Ovary (tissue), 10 donors: ENCODE measurements at regions of chr17 and their contacts with region 1.

Region 1: GRCh38 chr17:28733346-28733745 is 4.8 kb downstream of the NEK8 start:
- DNase-seq: no peak
- H3K4me3 ChIP-seq: no peak overlapping the region
- H3K27ac ChIP-seq: no peak overlapping the region
- H3K4me1 ChIP-seq: no peaks in the 10 kb centered on the region
- H3K27me3 ChIP-seq: no peaks in the 10 kb centered on the region
- CTCF ChIP-seq: no peak
- EP300 ChIP-seq: no peak
- POLR2A ChIP-seq: no peak

Region 2: DNA sequence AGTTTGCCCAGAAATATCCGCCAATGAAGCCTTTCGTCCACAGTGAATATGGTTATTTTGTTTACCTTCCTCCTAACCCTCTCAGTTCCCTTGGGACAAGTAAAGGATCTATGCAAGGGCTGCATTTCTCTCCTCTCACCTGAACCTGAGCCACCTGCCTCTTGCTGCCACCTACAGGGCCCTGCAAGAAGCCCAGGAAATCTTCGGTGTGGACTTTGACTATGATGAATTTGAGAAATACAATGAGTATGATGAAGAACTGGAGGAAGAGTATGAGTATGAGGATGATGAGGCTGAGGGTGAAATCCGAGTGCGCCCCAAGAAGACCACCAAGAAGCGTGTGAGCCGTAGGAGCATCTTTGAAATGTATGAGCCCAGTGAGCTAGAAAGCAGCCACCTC is 57.4 kb before region 1 on chr17:
- intact Hi-C with region 1: no loop called
- DNase-seq: no peak
- H3K4me3 ChIP-seq: no peak overlapping the region
- H3K27ac ChIP-seq: no peak overlapping the region
- H3K4me1 ChIP-seq: no peaks in the 10 kb centered on the region
- H3K27me3 ChIP-seq: no peaks in the 10 kb centered on the region
- CTCF ChIP-seq: no peak
- EP300 ChIP-seq: no peak
- POLR2A ChIP-seq: no peak

Region 3: GRCh38 chr17:28701987-28702751 is 31.2 kb before region 1 on chr17:
- intact Hi-C with region 1: loop called in 1 of 4 experiments (anchors 1 kb)
- DNase-seq: no peak
- H3K4me3 ChIP-seq: no peak overlapping the region
- H3K27ac ChIP-seq: no peak overlapping the region
- H3K4me1 ChIP-seq: no peaks in the 10 kb centered on the region
- H3K27me3 ChIP-seq: no peaks in the 10 kb centered on the region
- CTCF ChIP-seq: no peak
- EP300 ChIP-seq: no peak
- POLR2A ChIP-seq: no peak